CD8-positive, alpha-beta T cell (primary cell): ENCODE measurements at regions of chr6 and their contacts with region 1.

Region 1: DNA sequence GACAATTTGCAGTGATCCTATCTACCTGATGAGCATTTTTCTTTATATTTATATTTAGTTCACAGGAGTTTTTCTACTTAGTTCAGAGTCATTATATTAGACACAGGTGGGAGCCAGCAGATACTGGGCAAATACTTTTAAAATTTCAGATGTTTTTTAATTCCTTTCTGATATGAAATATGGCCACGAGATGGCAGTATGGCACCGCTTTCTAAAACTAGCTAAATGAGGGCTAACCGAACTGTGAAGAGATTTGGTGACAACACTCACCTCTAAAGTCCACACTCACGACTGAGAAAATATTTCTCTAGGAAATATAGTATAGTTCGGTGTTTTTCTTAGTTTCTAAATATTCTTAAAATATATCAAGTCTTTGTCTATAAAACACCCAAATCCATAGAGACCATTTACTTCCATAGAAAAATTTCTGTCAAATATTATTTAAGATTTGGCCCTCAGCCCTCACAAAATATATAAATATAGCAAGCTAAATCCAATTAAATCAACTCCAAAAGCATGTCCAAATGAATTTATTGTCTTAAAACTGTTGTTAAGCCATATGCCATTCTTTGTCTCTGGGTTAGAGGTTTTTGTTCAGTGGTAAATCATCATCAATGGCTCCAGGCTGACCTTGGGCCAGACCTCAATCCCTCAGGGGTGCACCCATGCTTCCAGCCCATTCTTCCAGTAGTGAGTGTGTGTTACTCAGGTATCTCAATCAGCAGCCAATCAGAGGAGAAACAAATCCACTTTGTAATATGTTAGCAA is 63.6 kb downstream of the HUS1B start:
- DNase-seq: peak; percentile 31 to 76 (median 66)
- ATAC-seq: peak; percentile 61
- H3K4me3 ChIP-seq: no peak overlapping the region
- H3K4me3 Mint-ChIP-seq: no peak overlapping the region
- H3K27ac ChIP-seq: no peak overlapping the region
- H3K27ac Mint-ChIP-seq: peak overlapping the region; percentile 6
- H3K4me1 ChIP-seq: no peaks in the 10 kb centered on the region
- H3K4me1 Mint-ChIP-seq: no peaks in the 10 kb centered on the region
- H3K27me3 ChIP-seq: no peaks in the 10 kb centered on the region
- H3K27me3 Mint-ChIP-seq: no peaks in the 10 kb centered on the region
- CTCF ChIP-seq: peak; percentile 78

Region 2: DNA sequence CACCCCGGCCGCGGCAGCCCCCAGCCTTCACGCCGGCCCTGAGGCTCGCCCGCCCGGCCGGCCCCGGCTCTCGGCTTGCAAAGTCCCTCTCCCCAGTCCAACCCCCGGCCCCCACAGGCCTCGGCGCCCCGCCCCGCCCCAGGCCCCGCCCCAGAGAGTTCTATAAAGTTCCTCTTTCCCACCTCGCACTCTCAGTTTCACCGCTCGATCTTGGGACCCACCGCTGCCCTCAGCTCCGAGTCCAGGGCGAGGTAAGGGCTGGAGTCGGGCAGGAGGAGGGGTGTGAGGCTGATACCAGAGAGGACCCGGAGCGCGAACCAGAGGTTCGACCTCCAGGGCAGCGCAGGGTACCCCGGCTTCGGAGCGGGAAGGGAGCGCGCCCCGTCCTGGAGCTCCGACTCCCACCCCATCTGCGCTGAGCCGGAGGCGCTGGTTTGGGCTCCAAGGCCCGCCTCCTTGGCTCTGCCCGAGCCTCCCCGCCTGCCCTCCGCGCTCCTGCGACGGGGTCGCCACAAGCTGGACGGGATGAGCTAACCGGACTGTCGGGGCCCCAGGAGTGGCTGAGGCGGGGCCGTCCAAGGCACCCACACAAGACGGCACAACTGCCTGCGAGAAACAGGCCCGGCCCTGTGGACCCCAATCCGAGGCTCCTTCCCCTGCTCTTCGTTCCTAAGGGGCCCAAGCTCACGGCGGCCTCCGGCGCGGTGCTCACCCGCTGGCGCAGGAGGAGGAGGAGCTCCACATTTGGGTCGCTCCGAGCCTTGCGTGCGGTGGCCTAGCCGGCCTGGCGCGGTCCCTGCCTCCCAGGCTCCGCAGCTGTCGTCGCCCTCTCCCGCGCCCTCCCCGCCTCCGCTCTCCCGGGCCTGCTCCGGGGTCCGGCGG is 201.5 kb before region 1 on chr6 and contains the start of gene IRF4:
- CTCF ChIA-PET with region 1: interaction called, 5 read pairs
- POLR2A ChIA-PET with region 1: interaction called, 3 read pairs
- intact Hi-C with region 1: loop called in 1 of 2 experiments (anchors 5 kb)
- DNase-seq: peak in 6 of 9 experiments; percentile 32 to 59 (median 36)
- ATAC-seq: peak; percentile 39
- H3K4me3 ChIP-seq: peak within 1 kb of the TSS; percentile 77 to 78
- H3K4me3 Mint-ChIP-seq: peak within 1 kb of the TSS; percentile 93
- H3K27ac ChIP-seq: no peak within 1 kb of the TSS
- H3K27ac Mint-ChIP-seq: peak within 1 kb of the TSS; percentile 85
- H3K4me1 ChIP-seq: peaks cover 17% of the 10 kb centered on the region
- H3K4me1 Mint-ChIP-seq: peaks cover 28% of the 10 kb centered on the region
- H3K27me3 ChIP-seq: peaks cover 0 to 10% of the 10 kb centered on the region in 2 experiments
- H3K27me3 Mint-ChIP-seq: peaks cover 7% of the 10 kb centered on the region
- CTCF ChIP-seq: no peak
- total RNA-seq, gene IRF4: 24.7 to 25.6 TPM

Region 3: DNA sequence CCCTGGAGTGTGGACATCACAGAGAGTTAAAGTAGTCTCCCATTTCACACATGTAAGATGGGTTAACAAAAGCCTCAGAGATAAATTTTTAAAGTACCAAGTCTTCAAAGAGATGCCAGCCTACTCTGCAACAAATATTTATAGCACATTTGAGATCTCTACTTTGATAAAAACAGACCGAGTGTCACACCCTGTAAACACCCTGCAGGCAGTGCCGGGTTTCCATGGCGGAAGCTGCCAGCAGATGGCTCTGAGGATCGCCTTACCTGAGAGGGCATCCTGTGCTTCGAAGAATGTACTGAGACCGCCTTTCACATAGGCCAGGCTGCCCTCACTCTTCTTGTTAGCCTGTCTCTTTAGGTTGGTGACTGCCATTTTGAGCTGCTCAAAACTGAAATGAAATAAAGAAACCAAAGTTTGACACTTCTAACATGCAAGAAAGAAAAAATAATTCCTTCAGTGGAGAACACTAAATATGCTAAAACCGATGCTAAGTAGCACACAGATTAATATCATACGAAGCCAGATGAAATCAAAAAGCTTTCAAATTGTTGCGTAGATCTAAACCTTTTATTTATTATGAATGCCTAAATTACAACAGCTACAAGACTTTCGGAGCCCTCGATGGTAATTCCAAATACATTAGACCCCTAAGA is 24.2 kb after region 1 on chr6:
- CTCF ChIA-PET with region 1: interaction called, 12 read pairs
- POLR2A ChIA-PET with region 1: no interaction called
- intact Hi-C with region 1: no loop called
- DNase-seq: peak in 3 of 9 experiments; percentile 3 to 26 (median 20)
- ATAC-seq: no peak
- H3K4me3 ChIP-seq: no peak overlapping the region
- H3K4me3 Mint-ChIP-seq: no peak overlapping the region
- H3K27ac ChIP-seq: no peak overlapping the region
- H3K27ac Mint-ChIP-seq: no peak overlapping the region
- H3K4me1 ChIP-seq: no peaks in the 10 kb centered on the region
- H3K4me1 Mint-ChIP-seq: no peaks in the 10 kb centered on the region
- H3K27me3 ChIP-seq: no peaks in the 10 kb centered on the region
- H3K27me3 Mint-ChIP-seq: no peaks in the 10 kb centered on the region
- CTCF ChIP-seq: no peak

Region 4: DNA sequence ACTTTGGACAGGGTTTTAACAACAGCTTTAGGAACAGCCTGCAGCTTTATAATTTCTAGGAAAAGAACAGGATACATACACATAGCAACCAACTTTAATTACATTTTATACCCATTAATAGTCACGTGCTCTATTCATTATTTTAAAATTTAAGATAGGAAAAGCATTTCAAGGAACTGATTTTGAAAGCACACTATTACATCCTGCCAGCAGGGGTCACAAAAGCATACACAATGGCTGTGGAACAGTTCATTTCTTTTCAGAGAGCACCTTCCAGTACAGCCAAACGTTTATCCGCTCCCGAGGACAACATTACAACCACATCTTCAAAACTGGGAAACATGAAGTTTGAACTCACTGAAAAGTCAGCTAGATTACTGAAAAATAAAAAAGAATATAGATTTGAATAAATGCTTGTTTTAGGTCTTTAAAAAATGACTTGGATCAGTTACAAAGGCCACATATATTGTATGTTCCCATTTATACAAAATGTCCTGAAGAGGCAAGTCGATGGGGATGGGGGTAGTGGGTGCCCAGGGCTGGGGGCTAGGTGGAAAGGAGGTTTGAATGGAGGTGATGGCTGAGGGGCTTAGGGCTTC is 204.3 kb after region 1 on chr6:
- CTCF ChIA-PET with region 1: interaction called, 4 read pairs
- POLR2A ChIA-PET with region 1: no interaction called
- intact Hi-C with region 1: loop called (anchors 2 to 5 kb)
- DNase-seq: peak in 4 of 9 experiments; percentile 23 to 54 (median 35)
- ATAC-seq: no peak
- H3K4me3 ChIP-seq: no peak overlapping the region
- H3K4me3 Mint-ChIP-seq: no peak overlapping the region
- H3K27ac ChIP-seq: no peak overlapping the region
- H3K27ac Mint-ChIP-seq: no peak overlapping the region
- H3K4me1 ChIP-seq: no peaks in the 10 kb centered on the region
- H3K4me1 Mint-ChIP-seq: no peaks in the 10 kb centered on the region
- H3K27me3 ChIP-seq: peaks cover 0 to 2% of the 10 kb centered on the region in 2 experiments
- H3K27me3 Mint-ChIP-seq: peaks cover 31% of the 10 kb centered on the region
- CTCF ChIP-seq: peak; percentile 70

Region 5: GRCh38 chr6:1396952-1397868 is 803.9 kb after region 1 on chr6:
- CTCF ChIA-PET with region 1: interaction called, 77 read pairs
- POLR2A ChIA-PET with region 1: interaction called, 3 read pairs
- intact Hi-C with region 1: loop called (anchors 1 kb)
- DNase-seq: peak; percentile 38 to 82 (median 66)
- ATAC-seq: peak; percentile 61
- H3K4me3 ChIP-seq: no peak overlapping the region
- H3K4me3 Mint-ChIP-seq: no peak overlapping the region
- H3K27ac ChIP-seq: no peak overlapping the region
- H3K27ac Mint-ChIP-seq: no peak overlapping the region
- H3K4me1 ChIP-seq: peaks cover 3% of the 10 kb centered on the region
- H3K4me1 Mint-ChIP-seq: peaks cover 5% of the 10 kb centered on the region
- H3K27me3 ChIP-seq: peaks cover 5 to 13% of the 10 kb centered on the region in 2 experiments
- H3K27me3 Mint-ChIP-seq: peaks cover 52% of the 10 kb centered on the region
- CTCF ChIP-seq: peak; percentile 86